Transverse colon (tissue), 4 donors: ENCODE measurements at regions of chr2 and their contacts with region 1.

Region 1: GRCh38 chr2:239934571-239935171 is 90.5 kb downstream of the NDUFA10 start:
- DNase-seq: peak; percentile 71
- H3K4me3 ChIP-seq: no peak overlapping the region
- H3K27ac ChIP-seq: no peak overlapping the region
- H3K4me1 ChIP-seq: no peaks in the 10 kb centered on the region
- H3K27me3 ChIP-seq: no peaks in the 10 kb centered on the region
- CTCF ChIP-seq: peak; percentile 71 to 80 (median 78)
- EP300 ChIP-seq: no peak
- POLR2A ChIP-seq: no peak

Region 2: GRCh38 chr2:239129147-239129920 is 805.3 kb before region 1 on chr2:
- in situ Hi-C with region 1: no loop called
- intact Hi-C with region 1: no loop called
- DNase-seq: no peak
- H3K4me3 ChIP-seq: no peak overlapping the region
- H3K27ac ChIP-seq: no peak overlapping the region
- H3K4me1 ChIP-seq: no peaks in the 10 kb centered on the region
- H3K27me3 ChIP-seq: no peaks in the 10 kb centered on the region
- CTCF ChIP-seq: no peak
- EP300 ChIP-seq: no peak
- POLR2A ChIP-seq: no peak

Region 3: GRCh38 chr2:239882331-239882732 is 52.3 kb before region 1 on chr2:
- in situ Hi-C with region 1: no loop called
- intact Hi-C with region 1: no loop called
- DNase-seq: peak; percentile 66
- H3K4me3 ChIP-seq: no peak overlapping the region
- H3K27ac ChIP-seq: no peak overlapping the region
- H3K4me1 ChIP-seq: peaks cover 0 to 7% (median 0%) of the 10 kb centered on the region in 4 donors
- H3K27me3 ChIP-seq: no peaks in the 10 kb centered on the region
- CTCF ChIP-seq: peak; percentile 64 to 74 (median 67)
- EP300 ChIP-seq: no peak
- POLR2A ChIP-seq: no peak

Region 4: DNA sequence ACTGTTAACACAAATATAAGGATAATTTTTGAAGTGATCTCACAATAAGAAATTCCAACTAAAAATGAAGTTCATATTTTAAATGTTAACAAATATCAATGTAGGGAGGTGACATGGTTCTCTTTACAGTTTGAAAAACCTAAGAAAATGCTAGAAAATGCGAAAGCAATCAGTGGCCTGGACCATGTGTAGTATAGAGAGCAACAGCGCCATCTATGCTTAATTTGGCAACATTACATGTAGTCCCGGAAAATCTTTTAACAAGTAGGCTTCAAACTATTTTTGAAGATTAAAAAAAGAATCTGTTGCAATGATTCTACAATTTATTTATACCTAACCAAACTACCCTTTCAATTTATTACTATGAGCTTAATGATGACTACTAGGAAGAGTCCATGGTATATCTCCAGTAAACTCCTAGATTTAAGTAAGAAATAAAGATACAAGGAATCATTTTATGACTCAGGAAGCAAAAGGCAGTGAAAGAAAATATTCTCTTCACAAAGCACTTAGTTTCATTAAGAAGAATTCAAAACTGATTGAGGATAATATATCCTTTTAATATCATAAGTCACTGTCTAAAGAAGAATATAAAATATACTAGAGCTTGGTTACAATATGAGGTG is 57.1 kb after region 1 on chr2:
- in situ Hi-C with region 1: no loop called
- intact Hi-C with region 1: loop called (anchors 2 kb)
- DNase-seq: no peak
- H3K4me3 ChIP-seq: no peak overlapping the region
- H3K27ac ChIP-seq: peak overlapping the region in 3 of 4 donors; percentile 39 to 48 (median 39)
- H3K4me1 ChIP-seq: peaks cover 0 to 9% (median 0%) of the 10 kb centered on the region in 4 donors
- H3K27me3 ChIP-seq: no peaks in the 10 kb centered on the region
- CTCF ChIP-seq: peak; percentile 76 to 83 (median 81)
- EP300 ChIP-seq: no peak
- POLR2A ChIP-seq: no peak